Head of caudate nucleus (tissue), 42 donors: ENCODE measurements at regions of chr11 and their contacts with region 1.

Region 1: GRCh38 chr11:94776351-94777321 is 8.5 kb downstream of the AMOTL1 start:
- DNase-seq: no peak

Region 2: GRCh38 chr11:94721565-94722292 is 54.9 kb before region 1 on chr11:
- intact Hi-C with region 1: no loop called
- DNase-seq: no peak

Region 3: GRCh38 chr11:94834911-94835593 is 58.4 kb after region 1 on chr11:
- intact Hi-C with region 1: loop called (anchors 10 kb)
- DNase-seq: no peak